OCI-LY7 (cell line): ENCODE measurements at regions of chr6 and their contacts with region 1.

Region 1: DNA sequence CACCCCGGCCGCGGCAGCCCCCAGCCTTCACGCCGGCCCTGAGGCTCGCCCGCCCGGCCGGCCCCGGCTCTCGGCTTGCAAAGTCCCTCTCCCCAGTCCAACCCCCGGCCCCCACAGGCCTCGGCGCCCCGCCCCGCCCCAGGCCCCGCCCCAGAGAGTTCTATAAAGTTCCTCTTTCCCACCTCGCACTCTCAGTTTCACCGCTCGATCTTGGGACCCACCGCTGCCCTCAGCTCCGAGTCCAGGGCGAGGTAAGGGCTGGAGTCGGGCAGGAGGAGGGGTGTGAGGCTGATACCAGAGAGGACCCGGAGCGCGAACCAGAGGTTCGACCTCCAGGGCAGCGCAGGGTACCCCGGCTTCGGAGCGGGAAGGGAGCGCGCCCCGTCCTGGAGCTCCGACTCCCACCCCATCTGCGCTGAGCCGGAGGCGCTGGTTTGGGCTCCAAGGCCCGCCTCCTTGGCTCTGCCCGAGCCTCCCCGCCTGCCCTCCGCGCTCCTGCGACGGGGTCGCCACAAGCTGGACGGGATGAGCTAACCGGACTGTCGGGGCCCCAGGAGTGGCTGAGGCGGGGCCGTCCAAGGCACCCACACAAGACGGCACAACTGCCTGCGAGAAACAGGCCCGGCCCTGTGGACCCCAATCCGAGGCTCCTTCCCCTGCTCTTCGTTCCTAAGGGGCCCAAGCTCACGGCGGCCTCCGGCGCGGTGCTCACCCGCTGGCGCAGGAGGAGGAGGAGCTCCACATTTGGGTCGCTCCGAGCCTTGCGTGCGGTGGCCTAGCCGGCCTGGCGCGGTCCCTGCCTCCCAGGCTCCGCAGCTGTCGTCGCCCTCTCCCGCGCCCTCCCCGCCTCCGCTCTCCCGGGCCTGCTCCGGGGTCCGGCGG is at the start of gene IRF4:
- DNase-seq: peak; percentile 84
- H3K4me3 ChIP-seq: peak within 1 kb of the TSS; percentile 98
- H3K27ac ChIP-seq: peak within 1 kb of the TSS; percentile 57
- H3K4me1 ChIP-seq: peaks cover 49% of the 10 kb centered on the region
- CTCF ChIP-seq: no peak
- total RNA-seq, gene IRF4: 143 and 189 TPM in 2 replicates

Region 2: DNA sequence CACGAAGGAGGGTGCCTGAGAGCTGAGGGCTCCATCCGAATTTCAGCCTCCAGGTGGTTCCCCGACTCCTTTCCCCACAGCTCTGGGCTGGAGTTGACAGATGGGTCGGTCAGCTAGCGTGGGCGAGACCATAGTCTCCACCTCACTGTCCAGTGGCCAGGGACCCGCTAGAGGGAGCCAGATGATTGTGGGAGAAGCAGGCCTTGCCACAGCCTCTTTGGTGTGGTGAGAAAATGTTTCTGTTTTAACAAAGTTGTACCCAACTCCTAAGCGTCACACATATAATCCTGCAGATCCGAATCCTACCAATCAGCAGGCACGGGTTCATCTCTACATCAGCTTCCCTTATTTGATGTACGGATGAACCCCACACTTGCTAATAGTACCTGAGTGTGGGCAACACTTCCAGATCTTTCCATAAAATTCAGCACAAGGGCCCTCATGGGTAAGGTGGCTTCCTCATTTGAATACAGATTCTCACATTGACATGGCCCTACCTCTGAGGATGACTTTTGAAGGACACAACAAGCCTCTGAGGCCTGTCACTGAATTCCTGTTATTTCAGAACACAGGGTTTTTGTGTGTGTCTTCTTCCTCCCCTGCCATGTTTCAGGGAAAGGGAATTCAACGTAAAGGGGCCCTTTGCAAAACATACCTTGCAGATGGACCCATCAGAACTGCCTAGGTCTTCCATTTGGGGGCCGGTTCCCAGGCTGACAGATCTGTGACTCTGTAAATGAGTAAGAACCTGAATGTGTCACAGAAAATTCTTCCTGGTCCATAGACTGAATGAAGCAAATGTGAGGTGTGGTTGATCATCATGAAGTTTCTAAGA is 202.8 kb before region 1 on chr6:
- CTCF ChIA-PET with region 1: no interaction called
- POLR2A ChIA-PET with region 1: interaction called, 10 read pairs
- intact Hi-C with region 1: no loop called
- DNase-seq: peak; percentile 89
- H3K4me3 ChIP-seq: no peak overlapping the region
- H3K27ac ChIP-seq: peak overlapping the region; percentile 24
- H3K4me1 ChIP-seq: peaks cover 87% of the 10 kb centered on the region
- CTCF ChIP-seq: peak; percentile 98

Region 3: DNA sequence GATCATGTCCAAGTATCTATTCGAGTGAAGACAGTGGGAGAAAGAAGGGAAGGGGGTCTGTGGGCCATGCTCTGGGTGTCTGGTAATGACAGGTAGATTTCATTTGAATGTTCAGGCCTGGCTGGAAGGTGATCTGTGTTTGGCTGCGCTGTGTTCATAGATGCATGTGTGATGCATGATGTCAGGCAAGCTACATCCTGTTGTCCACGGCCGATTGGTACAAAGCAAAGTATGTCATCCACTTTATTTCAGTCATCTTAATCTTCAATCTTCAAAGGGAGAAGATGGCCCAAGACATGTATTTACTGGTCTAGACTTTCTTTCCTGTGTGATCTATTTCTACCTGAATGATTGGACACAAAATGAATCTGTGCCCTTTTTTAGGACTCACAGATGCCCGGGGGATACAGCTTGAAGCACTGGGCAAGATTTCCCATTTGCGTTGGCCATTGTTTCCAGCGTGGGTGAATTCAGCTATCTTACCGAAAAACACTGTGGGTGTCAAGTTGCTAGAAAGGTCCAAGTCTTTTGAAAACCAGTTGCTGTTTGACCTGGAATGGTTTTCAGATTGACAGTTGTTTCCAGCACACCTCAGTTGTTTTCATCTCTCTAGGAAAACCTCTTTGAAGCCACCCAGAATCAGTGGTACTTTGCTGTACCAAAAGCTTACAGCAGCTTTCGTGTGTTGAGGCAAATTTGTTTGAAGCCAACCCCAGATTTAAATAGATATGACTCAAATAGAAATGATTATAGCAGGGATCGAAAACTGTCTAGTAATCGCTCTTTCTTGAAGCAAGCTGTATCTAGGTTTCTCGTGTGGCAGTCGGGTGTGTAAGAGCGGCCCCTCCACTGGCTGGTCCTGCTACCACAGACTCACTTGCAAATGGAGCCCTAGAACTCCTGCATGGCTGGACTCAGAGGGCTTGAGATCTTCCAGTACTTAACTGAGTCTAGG is 72.3 kb before region 1 on chr6:
- CTCF ChIA-PET with region 1: no interaction called
- POLR2A ChIA-PET with region 1: interaction called, 27 read pairs
- intact Hi-C with region 1: no loop called
- DNase-seq: no peak
- H3K4me3 ChIP-seq: no peak overlapping the region
- H3K27ac ChIP-seq: no peak overlapping the region
- H3K4me1 ChIP-seq: peaks cover 100% of the 10 kb centered on the region
- CTCF ChIP-seq: no peak

Region 4: DNA sequence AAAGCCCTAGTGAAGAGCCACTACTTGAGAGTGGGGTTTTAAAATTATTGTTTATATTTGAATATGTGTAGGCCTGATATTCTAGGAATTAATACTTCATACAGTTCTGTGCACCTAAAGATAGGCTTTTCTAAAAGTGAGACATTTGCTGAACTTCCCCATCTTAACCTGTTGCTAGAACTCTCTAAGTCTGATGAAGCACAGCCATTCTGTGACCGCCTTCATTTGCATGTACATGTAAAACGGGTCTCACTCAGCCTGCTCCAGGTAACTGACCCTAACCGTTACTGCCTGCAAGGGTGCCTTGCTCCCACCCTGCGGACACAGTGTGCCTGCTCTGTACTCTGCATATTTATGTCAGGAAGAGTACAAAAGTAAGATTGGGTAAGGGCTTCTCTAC is 44.6 kb before region 1 on chr6:
- CTCF ChIA-PET with region 1: interaction called, 3 read pairs
- POLR2A ChIA-PET with region 1: interaction called, 8 read pairs
- intact Hi-C with region 1: loop called (anchors 5 kb)
- DNase-seq: peak; percentile 87
- H3K4me3 ChIP-seq: peak overlapping the region; percentile 10
- H3K27ac ChIP-seq: peak overlapping the region; percentile 77
- H3K4me1 ChIP-seq: peaks cover 62% of the 10 kb centered on the region
- CTCF ChIP-seq: no peak

Region 5: DNA sequence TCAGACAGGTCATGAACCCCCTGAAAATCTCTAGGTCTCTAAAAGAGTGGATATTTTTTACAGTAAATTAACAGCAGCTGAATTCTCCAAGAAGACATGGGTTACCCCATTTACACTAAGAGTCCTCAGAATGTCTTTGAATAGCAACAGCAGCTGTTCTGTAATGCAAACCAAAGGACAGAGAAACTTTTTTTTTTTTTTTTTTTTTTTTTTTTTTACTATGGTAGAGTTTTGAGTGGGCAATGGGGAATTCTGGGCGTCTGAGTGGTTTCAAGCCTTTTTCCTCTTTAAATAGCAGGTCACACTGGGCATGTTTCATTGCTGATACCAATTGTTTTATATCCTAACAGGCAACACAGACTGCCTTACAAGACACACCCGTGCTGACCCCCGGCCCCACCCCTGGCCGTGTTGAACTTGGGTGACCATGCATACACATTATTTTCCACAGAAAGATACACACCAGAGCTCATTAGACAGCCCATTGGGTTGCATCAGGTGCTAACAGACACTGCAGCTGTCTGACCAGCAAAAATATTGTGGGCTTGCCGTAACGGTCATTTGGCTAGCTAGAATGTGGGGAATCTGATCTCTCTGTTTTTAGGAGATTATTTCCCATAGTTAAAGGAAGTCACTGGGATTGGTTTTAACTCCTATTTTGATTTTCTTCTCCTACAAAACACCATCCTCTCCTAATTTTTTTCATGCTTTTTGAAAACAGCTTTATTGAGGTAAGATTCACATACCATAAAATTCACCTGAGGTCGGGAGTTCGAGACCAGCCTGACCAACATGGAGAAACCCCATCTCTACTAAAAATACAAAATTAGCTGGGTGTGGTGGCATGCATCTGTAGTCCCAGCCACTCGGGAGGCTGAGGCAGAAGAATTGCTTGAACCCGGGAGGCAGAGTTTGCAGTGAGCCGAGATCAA is 26.9 kb before region 1 on chr6:
- CTCF ChIA-PET with region 1: interaction called, 9 read pairs
- POLR2A ChIA-PET with region 1: interaction called, 47 read pairs
- intact Hi-C with region 1: loop called (anchors 2 kb)
- DNase-seq: peak; percentile 97
- H3K4me3 ChIP-seq: peak overlapping the region; percentile 45
- H3K27ac ChIP-seq: peak overlapping the region; percentile 95
- H3K4me1 ChIP-seq: peaks cover 84% of the 10 kb centered on the region
- CTCF ChIP-seq: no peak

Region 6: GRCh38 chr6:408599-409102 is 16.9 kb after region 1 on chr6:
- CTCF ChIA-PET with region 1: no interaction called
- POLR2A ChIA-PET with region 1: interaction called, 95 read pairs
- intact Hi-C with region 1: no loop called
- DNase-seq: peak; percentile 30
- H3K4me3 ChIP-seq: no peak overlapping the region
- H3K27ac ChIP-seq: no peak overlapping the region
- H3K4me1 ChIP-seq: peaks cover 17% of the 10 kb centered on the region
- CTCF ChIP-seq: peak; percentile 82